ENCODE measurements at regions of chr9 and their contacts with region 1.

Region 1: DNA sequence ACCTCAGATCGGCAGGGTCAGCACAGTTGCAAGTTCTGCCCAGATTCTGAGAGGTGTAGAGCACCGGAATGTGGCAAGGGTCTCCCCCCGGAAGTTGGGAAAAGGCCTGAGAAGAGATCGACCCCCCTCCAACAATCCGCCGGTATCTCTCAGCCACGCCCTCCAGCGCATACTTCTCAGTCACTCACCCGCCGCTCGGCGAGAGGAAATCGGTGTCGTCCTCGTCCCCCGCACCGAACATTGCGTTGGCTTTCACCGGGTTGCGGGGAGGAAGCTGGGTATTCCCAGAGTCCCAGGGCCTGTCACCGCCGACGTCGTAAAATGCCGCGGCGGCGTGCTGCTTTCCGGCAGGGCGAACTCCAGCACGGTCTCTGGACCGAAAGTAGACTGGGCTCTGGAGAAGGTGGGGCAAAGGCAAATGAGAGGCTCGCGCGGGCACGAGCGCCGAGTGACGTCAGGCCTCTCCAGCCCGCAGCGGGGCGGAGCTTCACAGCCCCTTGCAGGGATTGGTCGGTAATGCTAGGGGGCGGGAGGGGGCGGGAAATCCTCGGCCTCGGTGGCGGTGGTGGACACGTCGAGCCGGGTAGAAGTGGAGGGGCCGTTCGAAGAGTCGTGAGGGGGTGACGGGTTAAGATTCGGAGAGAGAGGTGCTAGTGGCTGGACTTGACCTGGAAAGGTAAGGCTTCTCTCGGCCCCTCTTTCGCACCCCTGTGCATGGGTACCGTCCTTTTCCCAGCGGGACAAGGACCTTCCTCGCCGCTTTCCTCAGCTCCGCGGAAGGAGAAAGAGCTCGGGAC is at the starts of genes FKBP15 and SLC31A1:
- DNase-seq: peak; percentile 98
- ATAC-seq: peak; percentile 97
- H3K4me3 Mint-ChIP-seq: peak within 1 kb of the TSS; percentile 89
- H3K27ac Mint-ChIP-seq: peak within 1 kb of the TSS; percentile 93
- H3K4me1 Mint-ChIP-seq: peaks cover 46% of the 10 kb centered on the region
- H3K27me3 Mint-ChIP-seq: no peaks in the 10 kb centered on the region
- total RNA-seq, gene FKBP15: 34.0 to 44.2 TPM
- total RNA-seq, gene SLC31A1: 14.8 to 18.2 TPM

Region 2: DNA sequence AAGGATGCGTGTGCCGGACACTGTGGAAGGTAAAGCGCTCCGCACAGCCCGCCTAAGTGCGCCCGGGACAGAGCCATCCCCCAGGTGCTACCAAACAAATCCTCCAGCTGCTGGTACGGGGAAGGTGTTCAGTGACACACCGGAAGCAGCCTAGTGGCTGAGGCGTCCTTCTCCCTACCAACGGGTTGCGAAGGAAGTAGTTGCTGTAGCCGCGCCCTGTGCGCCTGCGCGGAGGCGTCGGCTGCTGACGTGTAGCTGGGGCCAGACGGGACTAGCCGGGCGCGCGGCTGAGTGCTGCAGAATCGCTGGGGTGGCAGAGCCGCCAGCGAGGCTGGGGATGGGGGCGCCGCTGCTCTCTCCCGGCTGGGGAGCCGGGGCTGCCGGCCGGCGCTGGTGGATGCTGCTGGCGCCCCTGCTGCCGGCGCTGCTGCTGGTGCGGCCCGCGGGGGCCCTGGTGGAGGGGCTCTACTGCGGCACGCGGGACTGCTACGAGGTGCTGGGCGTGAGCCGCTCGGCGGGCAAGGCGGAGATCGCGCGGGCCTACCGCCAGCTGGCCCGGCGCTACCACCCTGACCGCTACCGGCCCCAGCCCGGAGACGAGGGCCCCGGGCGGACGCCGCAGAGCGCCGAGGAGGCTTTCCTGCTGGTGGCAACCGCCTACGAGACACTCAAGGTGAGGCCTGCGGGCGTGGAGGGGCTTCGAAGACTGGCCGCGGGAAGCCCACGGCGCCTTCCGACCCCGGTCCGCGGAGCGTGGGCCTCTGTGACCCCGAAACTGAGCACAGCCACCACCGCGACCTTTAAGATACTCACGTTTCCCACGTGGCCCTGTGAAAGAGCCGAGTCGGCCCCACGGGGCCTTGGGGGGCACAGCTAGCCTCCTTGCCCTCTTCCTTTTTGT is 1589.9 kb before region 1 on chr9 and contains the start of gene DNAJC25:
- CTCF ChIA-PET with region 1: no interaction called
- POLR2A ChIA-PET with region 1: no interaction called
- intact Hi-C with region 1: loop called in 1 of 2 experiments (anchors 2 kb)
- DNase-seq: peak; percentile 98
- ATAC-seq: peak; percentile 98
- H3K4me3 Mint-ChIP-seq: peak within 1 kb of the TSS; percentile 94
- H3K27ac Mint-ChIP-seq: peak within 1 kb of the TSS; percentile 91
- H3K4me1 Mint-ChIP-seq: peaks cover 47% of the 10 kb centered on the region
- H3K27me3 Mint-ChIP-seq: no peaks in the 10 kb centered on the region
- total RNA-seq, gene DNAJC25: 6.3 to 7.5 TPM

Region 3: GRCh38 chr9:112717661-112718341 is 503.4 kb before region 1 on chr9 and contains the start of gene INIP:
- CTCF ChIA-PET with region 1: no interaction called
- POLR2A ChIA-PET with region 1: no interaction called
- intact Hi-C with region 1: loop called in 1 of 2 experiments (anchors 2 kb)
- DNase-seq: peak; percentile 99
- ATAC-seq: peak; percentile 93
- H3K4me3 Mint-ChIP-seq: peak within 1 kb of the TSS; percentile 89
- H3K27ac Mint-ChIP-seq: peak within 1 kb of the TSS; percentile 97
- H3K4me1 Mint-ChIP-seq: peaks cover 35% of the 10 kb centered on the region
- H3K27me3 Mint-ChIP-seq: no peaks in the 10 kb centered on the region
- total RNA-seq, gene INIP: 37.3 to 37.7 TPM

Region 4: GRCh38 chr9:113340017-113340699 is 119.0 kb after region 1 on chr9 and contains the start of gene WDR31:
- CTCF ChIA-PET with region 1: interaction called, 4 read pairs
- POLR2A ChIA-PET with region 1: no interaction called
- intact Hi-C with region 1: loop called in 1 of 2 experiments (anchors 2 kb)
- DNase-seq: peak; percentile 88
- ATAC-seq: peak; percentile 96
- H3K4me3 Mint-ChIP-seq: peak within 1 kb of the TSS; percentile 71
- H3K27ac Mint-ChIP-seq: peak within 1 kb of the TSS; percentile 43
- H3K4me1 Mint-ChIP-seq: peaks cover 27% of the 10 kb centered on the region
- H3K27me3 Mint-ChIP-seq: no peaks in the 10 kb centered on the region
- total RNA-seq, gene WDR31: 1.7 to 2.1 TPM

Region 5: DNA sequence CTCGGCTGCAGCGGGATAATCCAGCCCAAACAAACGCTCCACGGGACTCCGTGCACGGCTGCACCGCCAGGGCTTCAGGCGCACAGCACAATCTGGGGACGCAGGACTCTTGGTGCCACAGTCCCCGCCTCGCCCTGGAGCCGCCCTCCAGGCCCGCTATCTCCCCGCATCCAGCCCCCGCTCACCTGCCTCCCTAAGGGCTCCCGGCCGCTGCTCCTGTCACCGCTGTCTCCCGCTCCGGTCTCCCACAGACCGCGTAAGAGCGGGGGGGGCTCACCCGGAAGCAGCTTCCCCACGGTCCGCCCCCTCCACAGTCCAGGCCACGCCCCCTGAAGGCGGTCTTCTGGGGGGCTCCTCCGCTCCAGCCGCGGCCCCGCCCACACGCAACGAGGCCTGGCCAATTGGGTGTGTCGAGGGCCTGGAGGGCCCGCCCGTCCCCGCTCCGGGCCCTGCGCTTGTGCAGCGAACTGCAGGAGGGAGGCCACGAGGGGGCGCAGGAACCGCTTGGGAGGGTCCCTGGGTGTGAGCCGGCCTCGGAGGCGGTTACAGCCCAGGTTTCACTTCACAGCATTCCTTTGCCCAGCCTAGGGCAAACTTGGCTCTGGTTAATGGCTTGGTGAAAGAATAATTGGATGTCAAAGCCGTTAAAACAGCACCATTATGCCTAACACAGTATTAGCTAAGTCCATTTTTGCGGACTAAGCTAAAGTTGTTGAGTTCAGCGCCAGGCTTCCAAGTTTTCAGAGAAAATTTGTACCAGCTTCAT is 180.0 kb after region 1 on chr9 and contains the start of gene ALAD:
- CTCF ChIA-PET with region 1: interaction called, 5 read pairs
- POLR2A ChIA-PET with region 1: no interaction called
- intact Hi-C with region 1: loop called (anchors 1 kb)
- DNase-seq: peak; percentile 100
- ATAC-seq: peak; percentile 99
- H3K4me3 Mint-ChIP-seq: peak within 1 kb of the TSS; percentile 86
- H3K27ac Mint-ChIP-seq: peak within 1 kb of the TSS; percentile 84
- H3K4me1 Mint-ChIP-seq: peaks cover 19% of the 10 kb centered on the region
- H3K27me3 Mint-ChIP-seq: no peaks in the 10 kb centered on the region
- total RNA-seq, gene ALAD: 20.2 to 30.1 TPM